H1 (cell line): ENCODE measurements at regions of chr13 and their contacts with region 1.

Region 1: DNA sequence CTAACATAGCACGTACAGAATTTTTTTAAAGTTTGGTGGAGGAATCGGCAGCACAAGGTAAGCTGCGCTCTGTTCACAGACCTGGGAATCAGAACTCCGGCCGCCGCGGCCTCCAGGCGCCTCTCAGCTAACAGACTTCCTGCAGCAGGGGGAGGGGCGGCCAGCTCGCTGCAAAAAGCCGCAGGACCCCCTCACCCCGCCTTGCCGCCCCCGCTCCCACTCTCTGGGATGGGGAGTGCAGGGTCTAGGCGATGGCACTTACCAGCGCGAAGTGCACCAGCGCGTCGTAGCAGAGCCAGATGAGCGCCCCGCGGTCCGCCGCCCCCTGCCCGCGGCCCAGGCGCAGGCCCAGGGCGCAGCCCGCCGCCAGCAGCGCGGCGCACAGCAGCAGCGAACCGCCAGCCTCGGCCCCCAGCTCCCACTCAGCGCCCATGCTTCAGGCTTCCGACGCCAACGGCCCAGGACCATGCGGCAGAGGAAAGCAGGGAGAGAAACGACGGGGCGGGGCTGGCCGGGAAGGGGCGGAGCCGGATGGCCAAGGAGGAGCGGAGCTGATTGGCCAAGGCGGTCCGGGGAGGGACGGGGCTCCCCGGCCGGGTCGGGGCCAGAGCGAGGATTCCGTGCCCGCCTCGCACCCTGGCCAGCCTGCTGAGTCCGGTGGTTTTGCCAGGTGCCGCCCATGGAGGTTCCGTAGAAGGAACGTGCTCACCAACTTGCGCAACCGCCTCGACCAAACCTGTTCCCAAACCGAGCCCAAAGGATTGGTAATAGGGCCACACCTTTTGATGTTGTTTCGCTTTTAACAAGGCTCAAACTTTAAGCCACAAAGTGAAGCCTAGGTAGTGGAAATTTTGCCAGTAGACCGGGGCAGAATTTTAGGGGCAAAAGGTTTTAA is at the start of gene EBPL:
- DNase-seq: peak; percentile 79 to 99
- H3K4me3 ChIP-seq: peak within 1 kb of the TSS; percentile 57 to 84 (median 79)
- H3K27ac ChIP-seq: peak within 1 kb of the TSS; percentile 75; the same call in 1 of the 2 replicates
- H3K4me1 ChIP-seq: peaks cover 0 to 7% (median 2%) of the 10 kb centered on the region in 4 experiments; a peak in 2 of 7 replicates
- H3K27me3 ChIP-seq: no peaks in the 10 kb centered on the region
- CTCF ChIP-seq: no peak
- EP300 ChIP-seq: no peak
- POLR2A ChIP-seq: peak; percentile 90 to 96
- RAD21 ChIP-seq: no peak
- total RNA-seq, gene EBPL: 130 TPM in 2 replicates

Region 2: GRCh38 chr13:49701491-49701890 is 10.3 kb after region 1 on chr13:
- CTCF ChIA-PET with region 1: interaction called, 3 read pairs
- POLR2A ChIA-PET with region 1: interaction called, 10 read pairs
- DNase-seq: no peak
- H3K4me3 ChIP-seq: no peak overlapping the region
- H3K27ac ChIP-seq: no peak overlapping the region
- H3K4me1 ChIP-seq: peaks cover 0 to 8% (median 1%) of the 10 kb centered on the region in 4 experiments; a peak in 2 of 7 replicates
- H3K27me3 ChIP-seq: no peaks in the 10 kb centered on the region
- CTCF ChIP-seq: no peak
- EP300 ChIP-seq: no peak
- POLR2A ChIP-seq: no peak
- RAD21 ChIP-seq: no peak

Region 3: GRCh38 chr13:49711218-49711863 is 20.1 kb after region 1 on chr13:
- CTCF ChIA-PET with region 1: no interaction called
- POLR2A ChIA-PET with region 1: interaction called, 10 read pairs
- DNase-seq: no peak
- H3K4me3 ChIP-seq: no peak overlapping the region
- H3K27ac ChIP-seq: no peak overlapping the region
- H3K4me1 ChIP-seq: no peaks in the 10 kb centered on the region; a peak in 1 of 7 replicates
- H3K27me3 ChIP-seq: no peaks in the 10 kb centered on the region
- CTCF ChIP-seq: no peak
- EP300 ChIP-seq: no peak
- POLR2A ChIP-seq: no peak
- RAD21 ChIP-seq: no peak

Region 4: GRCh38 chr13:49731766-49732165 is 40.5 kb after region 1 on chr13:
- CTCF ChIA-PET with region 1: no interaction called
- POLR2A ChIA-PET with region 1: no interaction called
- DNase-seq: no peak
- H3K4me3 ChIP-seq: no peak overlapping the region
- H3K27ac ChIP-seq: no peak overlapping the region
- H3K4me1 ChIP-seq: no peaks in the 10 kb centered on the region
- H3K27me3 ChIP-seq: no peaks in the 10 kb centered on the region
- CTCF ChIP-seq: no peak
- EP300 ChIP-seq: no peak
- POLR2A ChIP-seq: no peak
- RAD21 ChIP-seq: no peak